Panc1 (cell line): ENCODE measurements at regions of chr20 and their contacts with region 1.

Region 1: DNA sequence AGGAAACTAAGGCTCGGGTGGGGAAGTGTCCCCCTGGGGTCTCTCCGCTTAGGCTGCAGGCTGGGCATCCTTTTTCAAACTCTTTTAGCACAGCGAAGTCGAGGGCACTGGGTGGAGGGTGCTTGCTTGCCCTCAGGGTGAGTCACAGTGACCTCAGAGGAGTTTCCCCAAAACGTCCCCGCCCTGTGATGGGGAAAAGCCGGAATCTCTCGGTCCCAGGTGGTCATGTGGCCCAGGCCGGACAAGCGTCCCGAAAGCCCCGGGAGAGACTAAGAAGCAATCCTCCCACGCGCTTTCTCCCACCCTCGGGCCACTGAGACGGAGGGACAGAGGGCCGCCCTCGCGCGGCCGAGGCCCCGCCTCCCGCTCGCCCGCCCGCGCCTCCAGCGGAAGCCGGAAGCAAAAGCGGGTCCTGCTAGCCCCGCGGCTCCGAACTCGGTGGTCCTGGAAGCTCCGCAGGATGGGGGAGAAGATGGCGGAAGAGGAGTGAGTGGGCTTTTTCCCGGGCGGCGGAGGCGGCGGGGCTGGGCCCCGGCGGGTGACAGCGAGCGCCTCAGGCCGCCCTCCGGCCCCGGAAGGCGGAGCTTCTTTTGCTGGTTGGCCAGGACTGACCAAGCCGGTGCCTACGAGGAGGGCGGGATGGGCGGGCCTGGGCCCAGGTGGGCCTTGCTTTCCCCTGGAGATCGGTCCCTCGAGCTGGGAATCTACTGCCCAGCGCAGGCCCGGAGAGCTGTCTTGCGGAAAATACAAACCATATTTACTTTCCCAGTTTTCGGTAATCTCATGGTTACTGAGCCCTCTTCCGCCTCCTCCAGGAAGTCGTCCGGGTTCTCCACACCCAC is at the start of gene SLC9A8:
- DNase-seq: peak; percentile 88
- ATAC-seq: peak; percentile 96
- H3K4me3 ChIP-seq: peak within 1 kb of the TSS; percentile 80
- H3K27ac ChIP-seq: peak within 1 kb of the TSS; percentile 99
- H3K4me1 ChIP-seq: peaks cover 18% of the 10 kb centered on the region
- H3K27me3 ChIP-seq: no peaks in the 10 kb centered on the region
- CTCF ChIP-seq: peak; percentile 44; the same call in 1 of the 2 replicates
- total RNA-seq, gene SLC9A8: 6.7 TPM

Region 2: GRCh38 chr20:49676581-49677291 is 135.9 kb before region 1 on chr20:
- CTCF ChIA-PET with region 1: no interaction called
- POLR2A ChIA-PET with region 1: no interaction called
- in situ Hi-C with region 1: no loop called
- intact Hi-C with region 1: no loop called
- DNase-seq: no peak
- ATAC-seq: peak; percentile 52
- H3K4me3 ChIP-seq: no peak overlapping the region
- H3K27ac ChIP-seq: peak overlapping the region; percentile 91
- H3K4me1 ChIP-seq: peaks cover 70% of the 10 kb centered on the region
- H3K27me3 ChIP-seq: no peaks in the 10 kb centered on the region
- CTCF ChIP-seq: no peak

Region 3: DNA sequence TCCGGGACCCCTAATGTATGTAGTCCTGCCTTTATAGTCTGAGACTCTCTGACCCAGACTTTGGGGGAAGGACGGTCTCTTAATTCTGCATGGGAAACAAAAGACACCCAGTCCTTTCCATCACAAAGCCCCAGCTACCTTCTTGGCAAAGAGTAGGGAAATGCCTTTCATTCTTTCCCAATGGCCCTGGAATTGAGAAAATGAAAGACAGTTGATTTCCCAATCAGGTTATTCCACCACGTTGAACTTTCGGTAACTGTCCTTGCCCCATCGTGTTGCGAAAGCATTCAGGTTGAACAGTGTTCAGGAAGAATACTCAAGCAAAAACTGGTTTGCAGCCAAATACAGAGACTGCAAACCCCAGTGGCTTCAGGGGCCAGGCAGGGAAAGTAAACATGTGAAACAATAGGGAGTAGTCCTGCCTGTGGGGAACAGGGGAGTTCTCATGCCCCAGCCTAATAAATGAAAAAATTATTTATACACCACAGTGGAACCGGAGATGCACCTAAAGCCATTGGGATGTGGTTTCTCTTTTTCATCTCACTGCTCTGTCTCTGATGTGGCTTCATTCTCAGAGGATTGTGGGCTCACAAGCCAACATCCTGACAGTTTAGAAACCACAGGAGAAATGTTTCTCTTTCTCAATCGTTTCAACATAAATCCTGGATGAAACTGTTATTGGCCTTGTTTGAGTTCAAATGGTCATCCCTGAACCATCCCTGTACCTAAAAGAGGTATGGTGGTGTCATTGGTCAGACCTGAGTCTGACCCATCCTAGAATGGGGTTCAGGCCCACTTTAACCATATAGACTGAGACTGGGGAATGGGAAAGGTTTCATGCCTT is 44.3 kb before region 1 on chr20:
- CTCF ChIA-PET with region 1: no interaction called
- POLR2A ChIA-PET with region 1: interaction called, 10 read pairs
- in situ Hi-C with region 1: no loop called
- intact Hi-C with region 1: no loop called
- DNase-seq: no peak
- ATAC-seq: no peak
- H3K4me3 ChIP-seq: no peak overlapping the region
- H3K27ac ChIP-seq: peak overlapping the region; percentile 8; the same call in 1 of the 2 replicates
- H3K4me1 ChIP-seq: peaks cover 7% of the 10 kb centered on the region
- H3K27me3 ChIP-seq: no peaks in the 10 kb centered on the region
- CTCF ChIP-seq: no peak

Region 4: GRCh38 chr20:49775229-49775693 is 37.4 kb before region 1 on chr20:
- CTCF ChIA-PET with region 1: interaction called, 7 read pairs
- POLR2A ChIA-PET with region 1: interaction called, 11 read pairs
- in situ Hi-C with region 1: no loop called
- intact Hi-C with region 1: no loop called
- DNase-seq: peak; percentile 91
- ATAC-seq: peak; percentile 86
- H3K4me3 ChIP-seq: no peak overlapping the region
- H3K27ac ChIP-seq: peak overlapping the region; percentile 25; the same call in 1 of the 2 replicates
- H3K4me1 ChIP-seq: peaks cover 17% of the 10 kb centered on the region
- H3K27me3 ChIP-seq: no peaks in the 10 kb centered on the region
- CTCF ChIP-seq: no peak

Region 5: GRCh38 chr20:49794336-49795138 is 18.1 kb before region 1 on chr20:
- CTCF ChIA-PET with region 1: no interaction called
- POLR2A ChIA-PET with region 1: no interaction called
- in situ Hi-C with region 1: no loop called
- intact Hi-C with region 1: no loop called
- DNase-seq: no peak
- ATAC-seq: no peak
- H3K4me3 ChIP-seq: no peak overlapping the region
- H3K27ac ChIP-seq: no peak overlapping the region
- H3K4me1 ChIP-seq: no peaks in the 10 kb centered on the region
- H3K27me3 ChIP-seq: no peaks in the 10 kb centered on the region
- CTCF ChIP-seq: no peak